Breast epithelium (tissue), 4 donors: ENCODE measurements at regions of chr16 and their contacts with region 1.

Region 1: GRCh38 chr16:84214451-84215066 is 23.6 kb downstream of the ADAD2 start:
- DNase-seq: no peak
- H3K4me3 ChIP-seq: no peak overlapping the region
- H3K27ac ChIP-seq: no peak overlapping the region
- H3K4me1 ChIP-seq: no peaks in the 10 kb centered on the region
- H3K27me3 ChIP-seq: no peaks in the 10 kb centered on the region
- CTCF ChIP-seq: no peak
- POLR2A ChIP-seq: no peak

Region 2: GRCh38 chr16:84159007-84159406 is 55.6 kb before region 1 on chr16:
- intact Hi-C with region 1: loop called (anchors 2 kb)
- DNase-seq: no peak
- H3K4me3 ChIP-seq: no peak overlapping the region
- H3K27ac ChIP-seq: no peak overlapping the region
- H3K4me1 ChIP-seq: no peaks in the 10 kb centered on the region
- H3K27me3 ChIP-seq: no peaks in the 10 kb centered on the region
- CTCF ChIP-seq: no peak
- POLR2A ChIP-seq: no peak

Region 3: GRCh38 chr16:84832488-84833143 is 618.1 kb after region 1 on chr16:
- intact Hi-C with region 1: no loop called
- DNase-seq: peak; percentile 65 to 81
- H3K4me3 ChIP-seq: peak overlapping the region in 1 of 3 donors; percentile 46
- H3K27ac ChIP-seq: peak overlapping the region; percentile 71 to 94
- H3K4me1 ChIP-seq: peaks cover 8 to 27% of the 10 kb centered on the region in 2 donors
- H3K27me3 ChIP-seq: no peaks in the 10 kb centered on the region
- CTCF ChIP-seq: no peak
- POLR2A ChIP-seq: no peak